Pancreas (tissue), 10 donors: ENCODE measurements at regions of chr10 and their contacts with region 1.

Region 1: GRCh38 chr10:131453594-131454355 is 142.3 kb upstream of the TCERG1L start:
- DNase-seq: peak in 5 of 6 donors; percentile 32 to 89 (median 69)
- ATAC-seq: peak; percentile 40 to 84 (median 73)
- H3K4me3 ChIP-seq: no peak overlapping the region
- H3K27ac ChIP-seq: no peak overlapping the region
- H3K4me1 ChIP-seq: no peaks in the 10 kb centered on the region
- H3K27me3 ChIP-seq: peaks cover 0 to 19% (median 0%) of the 10 kb centered on the region in 4 donors
- CTCF ChIP-seq: peak; percentile 86 to 93 (median 90)

Region 2: GRCh38 chr10:131786756-131787605 is 333.2 kb after region 1 on chr10:
- intact Hi-C with region 1: loop called in 1 of 3 experiments (anchors 10 kb)
- DNase-seq: peak in 1 of 6 donors; percentile 52
- ATAC-seq: peak in 3 of 4 donors; percentile 48 to 60 (median 55)
- H3K4me3 ChIP-seq: no peak overlapping the region
- H3K27ac ChIP-seq: no peak overlapping the region
- H3K4me1 ChIP-seq: no peaks in the 10 kb centered on the region
- H3K27me3 ChIP-seq: no peaks in the 10 kb centered on the region
- CTCF ChIP-seq: peak in 3 of 4 donors; percentile 48 to 79 (median 78)

Region 3: GRCh38 chr10:132175907-132176581 is 722.3 kb after region 1 on chr10:
- intact Hi-C with region 1: no loop called
- DNase-seq: peak in 1 of 6 donors; percentile 54
- ATAC-seq: peak in 1 of 4 donors; percentile 35
- H3K4me3 ChIP-seq: no peak overlapping the region
- H3K27ac ChIP-seq: no peak overlapping the region
- H3K4me1 ChIP-seq: no peaks in the 10 kb centered on the region
- H3K27me3 ChIP-seq: no peaks in the 10 kb centered on the region
- CTCF ChIP-seq: no peak